GM12878 (cell line): ENCODE measurements at regions of chr12 and their contacts with region 1.

Region 1: DNA sequence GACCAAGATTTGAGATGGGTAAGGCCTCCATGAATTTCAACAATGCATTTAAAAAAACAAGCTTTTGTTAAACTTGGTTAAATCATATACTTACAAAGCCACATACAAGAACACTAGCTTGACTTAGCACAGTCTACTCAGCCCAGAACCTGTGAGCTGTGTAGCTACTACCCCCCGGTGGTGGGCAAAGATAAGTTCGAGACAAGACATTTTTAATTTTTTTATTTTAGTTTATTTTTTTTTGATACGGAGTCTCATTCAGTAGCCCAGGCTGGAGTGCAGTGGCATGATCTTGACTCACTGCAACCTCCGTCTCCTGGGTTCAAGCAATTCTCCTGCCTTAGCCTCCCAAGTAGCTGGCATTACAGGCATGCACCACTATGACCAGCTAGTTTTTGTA is 3.7 kb upstream of the NECAP1 start:
- DNase-seq: no peak
- ATAC-seq: peak; percentile 11; the same call in 1 of the 3 replicates
- H3K4me3 ChIP-seq: no peak overlapping the region
- H3K27ac ChIP-seq: no peak overlapping the region
- H3K4me1 ChIP-seq: peaks cover 5% of the 10 kb centered on the region; the same call in 1 of the 2 replicates
- H3K27me3 ChIP-seq: no peaks in the 10 kb centered on the region
- CTCF ChIP-seq: peak; percentile 12 to 52 (median 36); a peak in 4 of 6 replicates
- EP300 ChIP-seq: no peak
- POLR2A ChIP-seq: no peak
- RAD21 ChIP-seq: peak; percentile 72

Region 2: DNA sequence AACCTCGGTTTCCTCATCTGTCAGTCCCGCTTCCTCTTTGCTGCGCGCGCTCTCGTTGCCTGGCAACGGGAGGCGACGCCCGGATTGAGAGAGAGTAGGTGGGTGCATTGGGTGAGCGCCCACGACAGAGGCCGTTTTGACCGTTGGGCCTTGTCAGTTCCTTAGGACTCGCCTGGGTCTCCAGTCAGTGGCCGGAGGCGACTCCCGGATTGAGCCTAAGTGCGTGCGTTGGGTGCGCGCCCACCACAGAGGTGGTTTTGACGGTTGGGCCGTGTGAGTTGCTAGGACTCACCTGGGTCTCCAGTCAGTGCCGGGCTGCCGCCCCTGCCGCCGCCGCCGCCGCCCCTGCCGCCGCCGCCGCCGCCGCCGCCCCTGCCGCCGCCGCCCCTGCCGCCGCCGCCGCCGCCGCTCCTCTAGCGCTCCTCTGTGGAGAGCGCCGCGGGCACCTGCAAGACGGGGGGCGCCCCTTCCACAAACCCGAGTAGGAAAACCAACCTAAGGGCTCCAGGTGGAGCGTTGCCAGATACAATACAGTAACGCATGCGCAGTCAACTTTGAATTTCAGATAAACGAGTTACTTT is 449.9 kb before region 1 on chr12:
- CTCF ChIA-PET with region 1: no interaction called
- POLR2A ChIA-PET with region 1: no interaction called
- RAD21 ChIA-PET with region 1: no interaction called
- SMC1A ChIA-PET with region 1: no interaction called
- in situ Hi-C with region 1: no loop called
- intact Hi-C with region 1: no loop called
- DNase-seq: no peak
- ATAC-seq: no peak
- H3K4me3 ChIP-seq: no peak overlapping the region
- H3K27ac ChIP-seq: no peak overlapping the region
- H3K4me1 ChIP-seq: no peaks in the 10 kb centered on the region
- H3K27me3 ChIP-seq: no peaks in the 10 kb centered on the region
- CTCF ChIP-seq: no peak
- EP300 ChIP-seq: no peak
- POLR2A ChIP-seq: no peak
- RAD21 ChIP-seq: no peak

Region 3: DNA sequence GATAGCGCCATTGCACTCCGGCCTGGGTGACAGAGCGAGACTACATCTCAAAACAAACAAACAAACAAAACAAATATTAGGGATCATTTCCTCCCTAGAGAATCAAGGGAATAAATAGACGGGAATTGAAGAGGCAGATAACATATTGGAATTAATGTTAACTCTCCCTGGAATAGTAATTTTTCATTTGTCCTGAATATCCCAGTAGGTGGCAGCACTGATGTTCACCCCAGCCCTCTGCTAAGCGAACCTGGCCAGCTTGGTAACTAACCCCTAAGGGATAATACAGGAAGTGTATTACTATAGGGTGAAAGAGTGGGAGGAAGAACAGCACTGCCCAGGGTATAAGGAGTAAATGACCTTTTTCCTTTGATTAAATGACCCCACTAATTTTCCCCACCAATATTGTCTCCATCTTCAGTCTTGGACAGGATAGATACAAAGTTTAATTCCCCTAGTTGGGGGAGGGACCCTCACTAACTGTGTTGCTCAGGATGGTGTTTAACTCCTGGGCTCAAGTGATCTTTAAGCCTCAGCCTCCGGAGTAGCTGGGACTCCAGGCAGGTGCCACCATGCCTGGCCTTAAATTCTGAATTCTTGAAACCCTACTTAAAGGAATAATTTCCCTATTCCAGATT is 246.2 kb before region 1 on chr12:
- CTCF ChIA-PET with region 1: interaction called, 10 read pairs
- POLR2A ChIA-PET with region 1: no interaction called
- RAD21 ChIA-PET with region 1: interaction called, 6 read pairs
- SMC1A ChIA-PET with region 1: no interaction called
- in situ Hi-C with region 1: no loop called
- intact Hi-C with region 1: no loop called
- DNase-seq: no peak
- ATAC-seq: peak; percentile 91
- H3K4me3 ChIP-seq: no peak overlapping the region
- H3K27ac ChIP-seq: no peak overlapping the region
- H3K4me1 ChIP-seq: no peaks in the 10 kb centered on the region
- H3K27me3 ChIP-seq: no peaks in the 10 kb centered on the region
- CTCF ChIP-seq: peak; percentile 16 to 54 (median 47); a peak in 4 of 6 replicates
- EP300 ChIP-seq: no peak
- POLR2A ChIP-seq: no peak
- RAD21 ChIP-seq: no peak

Region 4: GRCh38 chr12:7933255-7933729 is 145.1 kb before region 1 on chr12:
- CTCF ChIA-PET with region 1: interaction called, 25 read pairs
- POLR2A ChIA-PET with region 1: interaction called, 3 read pairs
- RAD21 ChIA-PET with region 1: interaction called, 8 read pairs
- SMC1A ChIA-PET with region 1: interaction called, 6 read pairs
- in situ Hi-C with region 1: no loop called
- intact Hi-C with region 1: loop called (anchors 10 kb)
- DNase-seq: peak; percentile 79
- ATAC-seq: peak; percentile 92
- H3K4me3 ChIP-seq: peak overlapping the region; percentile 83
- H3K27ac ChIP-seq: peak overlapping the region; percentile 86
- H3K4me1 ChIP-seq: no peaks in the 10 kb centered on the region
- H3K27me3 ChIP-seq: no peaks in the 10 kb centered on the region
- CTCF ChIP-seq: peak; percentile 61 to 77 (median 70); a peak in 5 of 6 replicates
- EP300 ChIP-seq: no peak
- POLR2A ChIP-seq: no peak
- RAD21 ChIP-seq: peak; percentile 79

Region 5: DNA sequence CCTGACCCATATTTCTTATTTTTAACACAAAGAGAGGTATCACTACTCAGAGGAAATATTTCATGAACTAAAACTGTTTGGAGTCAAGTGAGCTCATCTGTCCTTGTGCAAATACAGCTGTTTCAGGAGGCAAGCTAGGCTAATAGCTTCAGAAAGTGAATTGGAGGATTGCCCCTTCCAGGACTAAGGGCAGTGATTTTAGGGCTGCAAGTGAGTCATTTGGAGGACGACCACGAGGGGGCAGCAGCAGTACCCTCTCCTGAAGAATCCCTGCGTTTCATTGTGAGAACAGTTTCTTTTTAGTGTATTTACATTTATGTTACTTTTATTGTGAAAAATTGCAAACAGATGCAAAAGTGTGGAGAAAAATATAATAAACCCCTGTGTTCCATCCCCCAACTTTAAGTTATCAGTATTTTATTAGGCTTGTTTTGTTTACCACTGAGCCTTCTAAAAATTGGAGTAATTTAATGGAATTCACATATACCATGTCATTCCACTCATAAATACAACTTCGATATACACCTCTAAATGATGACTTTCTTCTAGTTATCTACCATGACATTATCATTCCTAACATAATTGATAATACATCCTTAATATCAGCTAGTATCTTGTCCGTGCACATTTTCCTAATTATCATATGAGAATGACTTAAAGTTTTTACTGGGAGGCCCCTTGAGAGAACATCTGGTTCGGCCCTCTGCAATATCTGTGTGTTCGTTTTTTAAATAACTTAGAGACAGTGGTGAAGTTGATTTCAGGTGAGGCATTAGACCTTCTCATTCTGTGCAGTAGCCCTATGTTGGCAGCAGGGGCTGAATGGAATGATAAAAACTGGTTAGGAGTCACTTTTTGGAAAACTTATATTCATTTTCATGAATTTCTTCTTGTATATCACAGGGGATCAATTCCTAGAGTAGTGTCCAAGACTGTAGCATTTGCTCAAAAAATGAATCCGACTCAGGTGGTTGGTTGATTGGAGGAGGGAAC is 32.1 kb before region 1 on chr12:
- CTCF ChIA-PET with region 1: interaction called, 115 read pairs
- POLR2A ChIA-PET with region 1: no interaction called
- RAD21 ChIA-PET with region 1: interaction called, 14 read pairs
- SMC1A ChIA-PET with region 1: interaction called, 14 read pairs
- in situ Hi-C with region 1: no loop called
- intact Hi-C with region 1: loop called (anchors 1 kb)
- DNase-seq: no peak
- ATAC-seq: peak; percentile 89
- H3K4me3 ChIP-seq: no peak overlapping the region
- H3K27ac ChIP-seq: no peak overlapping the region
- H3K4me1 ChIP-seq: no peaks in the 10 kb centered on the region
- H3K27me3 ChIP-seq: no peaks in the 10 kb centered on the region
- CTCF ChIP-seq: peak; percentile 85 to 89 (median 86)
- EP300 ChIP-seq: no peak
- POLR2A ChIP-seq: no peak
- RAD21 ChIP-seq: peak; percentile 66

Region 6: DNA sequence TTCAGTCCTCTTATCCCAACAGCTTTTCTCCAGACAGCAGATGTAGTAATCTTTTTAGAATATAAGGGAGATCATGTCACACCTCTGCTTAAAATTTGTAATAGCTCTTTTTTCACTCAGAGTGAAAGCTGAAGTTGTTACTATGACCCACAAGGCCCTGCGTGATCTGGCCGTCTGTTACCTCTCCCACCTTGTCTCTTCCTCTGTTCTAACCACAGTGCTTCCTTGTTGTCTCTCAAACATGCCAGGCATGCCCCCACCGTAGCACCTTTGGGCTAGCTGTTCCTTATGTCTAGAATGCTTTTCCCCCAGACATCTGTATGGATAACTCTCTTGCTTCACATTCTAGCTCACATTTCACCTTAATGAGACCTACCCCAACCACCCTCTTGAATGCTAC is 10.2 kb after region 1 on chr12:
- CTCF ChIA-PET with region 1: interaction called, 10 read pairs
- POLR2A ChIA-PET with region 1: interaction called, 13 read pairs
- RAD21 ChIA-PET with region 1: interaction called, 7 read pairs
- SMC1A ChIA-PET with region 1: interaction called, 3 read pairs
- in situ Hi-C with region 1: no loop called
- intact Hi-C with region 1: no loop called
- DNase-seq: no peak
- ATAC-seq: peak; percentile 84
- H3K4me3 ChIP-seq: peak overlapping the region; percentile 43
- H3K27ac ChIP-seq: peak overlapping the region; percentile 70
- H3K4me1 ChIP-seq: peaks cover 12% of the 10 kb centered on the region
- H3K27me3 ChIP-seq: no peaks in the 10 kb centered on the region
- CTCF ChIP-seq: no peak
- EP300 ChIP-seq: no peak
- POLR2A ChIP-seq: no peak
- RAD21 ChIP-seq: no peak

Region 7: DNA sequence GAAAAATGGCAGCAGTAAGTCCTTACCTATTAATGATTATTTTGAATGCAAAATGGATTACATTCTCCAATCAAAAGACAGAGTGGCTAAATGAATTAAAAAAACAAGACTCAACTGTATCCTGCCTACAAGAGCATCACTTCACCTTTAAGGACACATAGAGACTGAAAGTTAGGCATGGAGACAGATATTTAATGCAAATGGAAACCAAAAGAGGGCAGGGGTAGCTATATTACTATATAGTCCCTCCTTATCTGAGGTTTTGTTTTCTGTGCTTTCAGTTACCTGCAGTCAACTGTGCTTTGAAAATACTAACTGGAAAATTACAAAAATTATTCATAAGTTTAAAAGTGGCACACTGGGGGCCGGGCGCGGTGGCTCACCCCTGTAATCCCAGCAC is 20.8 kb after region 1 on chr12:
- CTCF ChIA-PET with region 1: no interaction called
- POLR2A ChIA-PET with region 1: no interaction called
- RAD21 ChIA-PET with region 1: no interaction called
- SMC1A ChIA-PET with region 1: no interaction called
- in situ Hi-C with region 1: no loop called
- intact Hi-C with region 1: no loop called
- DNase-seq: no peak
- ATAC-seq: no peak
- H3K4me3 ChIP-seq: no peak overlapping the region
- H3K27ac ChIP-seq: no peak overlapping the region
- H3K4me1 ChIP-seq: no peaks in the 10 kb centered on the region
- H3K27me3 ChIP-seq: no peaks in the 10 kb centered on the region
- CTCF ChIP-seq: no peak
- EP300 ChIP-seq: no peak
- POLR2A ChIP-seq: no peak
- RAD21 ChIP-seq: no peak